ENCODE measurements at regions of chr1 and their contacts with region 1.

Region 1: GRCh38 chr1:93171549-93172034 is 8.6 kb downstream of the TMED5 start:
- DNase-seq: no peak
- ATAC-seq: peak; percentile 39
- H3K4me3 Mint-ChIP-seq: peak overlapping the region; percentile 71
- H3K27ac Mint-ChIP-seq: peak overlapping the region; percentile 82
- H3K4me1 Mint-ChIP-seq: peaks cover 55% of the 10 kb centered on the region
- H3K27me3 Mint-ChIP-seq: no peaks in the 10 kb centered on the region

Region 2: DNA sequence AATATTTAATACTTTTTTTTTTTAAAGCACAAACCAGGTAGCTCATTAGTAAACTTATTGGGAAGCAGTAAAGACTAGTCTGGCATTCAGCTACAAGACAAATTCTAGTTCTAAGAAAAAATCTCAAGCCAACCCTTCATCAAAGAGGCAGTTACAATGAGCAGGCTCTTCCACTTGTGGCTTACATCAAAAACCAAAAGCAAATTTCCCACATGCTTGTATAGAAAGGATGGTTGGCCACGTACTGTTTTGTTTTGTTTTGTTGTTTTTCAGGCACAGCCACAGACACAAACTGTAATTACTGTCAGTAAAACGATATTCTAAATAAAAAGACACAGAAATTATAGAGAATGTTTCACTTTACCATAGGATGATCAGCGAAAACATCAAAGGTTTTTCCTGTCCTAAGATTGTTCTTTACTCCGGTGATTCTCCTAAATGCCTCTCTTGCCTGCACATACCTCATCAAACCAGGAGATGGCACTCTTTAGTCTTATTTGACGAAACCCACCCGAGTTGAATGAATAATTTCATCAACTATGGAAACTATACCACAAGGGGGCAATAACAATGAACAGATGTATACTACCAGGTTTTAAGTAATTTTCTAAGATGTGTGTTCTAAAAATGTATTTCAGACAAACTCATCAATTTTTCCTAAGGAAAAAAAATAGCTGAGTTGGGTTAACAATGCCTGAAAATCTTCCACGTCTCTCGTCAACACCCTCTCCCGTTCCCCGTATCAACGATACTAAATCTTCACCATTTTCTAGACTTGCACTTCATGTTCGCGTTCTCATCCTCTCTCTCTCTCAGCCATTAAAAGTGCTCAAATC is 312.8 kb before region 1 on chr1:
- CTCF ChIA-PET with region 1: no interaction called
- POLR2A ChIA-PET with region 1: no interaction called
- intact Hi-C with region 1: no loop called
- DNase-seq: peak; percentile 58
- ATAC-seq: peak; percentile 86
- H3K4me3 Mint-ChIP-seq: peak overlapping the region; percentile 48
- H3K27ac Mint-ChIP-seq: peak overlapping the region; percentile 48
- H3K4me1 Mint-ChIP-seq: peaks cover 17% of the 10 kb centered on the region
- H3K27me3 Mint-ChIP-seq: no peaks in the 10 kb centered on the region

Region 3: DNA sequence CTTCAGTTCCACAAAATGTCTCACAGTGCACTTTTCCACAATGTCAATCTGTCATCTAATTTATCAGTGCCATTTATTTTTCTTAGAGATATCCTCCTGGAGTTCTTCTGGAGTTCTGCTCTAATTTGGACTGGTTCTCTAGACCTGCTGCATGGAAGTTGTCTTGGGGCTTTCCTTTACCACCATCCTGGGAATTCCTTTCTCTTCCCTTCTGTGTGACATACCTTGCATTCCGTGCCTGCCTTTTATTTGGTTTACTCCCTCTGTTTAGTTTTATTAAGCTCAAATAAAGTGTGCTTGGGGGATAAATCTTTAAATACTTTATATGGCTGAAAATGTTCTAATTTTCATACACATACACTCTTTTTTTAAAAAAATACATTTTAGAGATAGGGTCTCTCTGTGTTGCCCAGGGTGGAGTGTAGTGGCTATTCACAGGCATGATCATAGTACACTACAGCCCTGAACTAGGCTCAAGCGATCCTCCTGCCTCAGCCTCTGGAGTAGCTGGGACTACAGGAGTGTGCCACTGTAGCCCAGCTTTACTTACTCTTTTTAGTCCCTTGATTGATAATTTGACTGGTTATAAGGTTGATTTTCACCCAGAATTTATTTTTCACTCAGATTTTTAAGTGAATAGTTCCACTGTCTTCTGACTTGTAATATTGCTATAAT is 78.1 kb before region 1 on chr1:
- CTCF ChIA-PET with region 1: no interaction called
- POLR2A ChIA-PET with region 1: no interaction called
- intact Hi-C with region 1: loop called in 1 of 2 experiments (anchors 5 kb)
- DNase-seq: no peak
- ATAC-seq: no peak
- H3K4me3 Mint-ChIP-seq: no peak overlapping the region
- H3K27ac Mint-ChIP-seq: no peak overlapping the region
- H3K4me1 Mint-ChIP-seq: peaks cover 47% of the 10 kb centered on the region
- H3K27me3 Mint-ChIP-seq: no peaks in the 10 kb centered on the region